CD4-positive, alpha-beta T cell (primary cell): ENCODE measurements at regions of chr19 and their contacts with region 1.

Region 1: DNA sequence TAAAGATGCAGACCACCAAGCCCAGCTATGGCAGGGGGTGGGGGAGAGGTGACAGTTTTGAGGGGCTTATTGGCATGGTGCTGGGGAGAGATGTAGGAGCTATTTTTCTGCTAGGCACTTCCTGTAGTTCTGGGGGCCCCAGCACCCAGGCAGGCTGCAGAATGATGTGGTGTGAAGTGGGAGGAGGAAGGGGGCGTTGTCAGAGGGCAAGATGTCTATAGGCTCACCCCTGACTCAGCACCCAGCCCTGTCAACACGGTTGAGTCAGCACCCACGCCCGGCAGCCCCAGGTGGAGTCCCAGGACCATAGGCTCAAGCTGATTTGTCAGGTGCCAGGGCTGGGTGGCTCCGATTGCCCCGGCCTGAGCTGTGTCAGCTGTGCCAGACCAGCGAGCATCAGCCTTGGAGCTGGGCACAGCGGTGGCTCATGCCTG is 5.8 kb downstream of the KLF2 start:
- DNase-seq: peak; percentile 87 to 98 (median 94)
- ATAC-seq: peak; percentile 66
- H3K4me3 ChIP-seq: peak overlapping the region; percentile 98
- H3K4me3 Mint-ChIP-seq: peak overlapping the region; percentile 92
- H3K27ac ChIP-seq: peak overlapping the region; percentile 77 to 94
- H3K27ac Mint-ChIP-seq: peak overlapping the region; percentile 97
- H3K4me1 ChIP-seq: peaks cover 49% of the 10 kb centered on the region
- H3K4me1 Mint-ChIP-seq: peaks cover 59% of the 10 kb centered on the region
- H3K27me3 ChIP-seq: no peaks in the 10 kb centered on the region
- H3K27me3 Mint-ChIP-seq: peaks cover 24% of the 10 kb centered on the region
- CTCF ChIP-seq: no peak

Region 2: GRCh38 chr19:16247353-16248182 is 82.8 kb before region 1 on chr19:
- CTCF ChIA-PET with region 1: interaction called, 9 read pairs
- POLR2A ChIA-PET with region 1: interaction called, 45 read pairs
- intact Hi-C with region 1: no loop called
- DNase-seq: peak; percentile 64 to 93 (median 83)
- ATAC-seq: peak; percentile 84
- H3K4me3 ChIP-seq: no peak overlapping the region
- H3K4me3 Mint-ChIP-seq: no peak overlapping the region
- H3K27ac ChIP-seq: no peak overlapping the region
- H3K27ac Mint-ChIP-seq: peak overlapping the region; percentile 31
- H3K4me1 ChIP-seq: peaks cover 17% of the 10 kb centered on the region
- H3K4me1 Mint-ChIP-seq: peaks cover 38% of the 10 kb centered on the region
- H3K27me3 ChIP-seq: no peaks in the 10 kb centered on the region
- H3K27me3 Mint-ChIP-seq: no peaks in the 10 kb centered on the region
- CTCF ChIP-seq: peak; percentile 80

Region 3: DNA sequence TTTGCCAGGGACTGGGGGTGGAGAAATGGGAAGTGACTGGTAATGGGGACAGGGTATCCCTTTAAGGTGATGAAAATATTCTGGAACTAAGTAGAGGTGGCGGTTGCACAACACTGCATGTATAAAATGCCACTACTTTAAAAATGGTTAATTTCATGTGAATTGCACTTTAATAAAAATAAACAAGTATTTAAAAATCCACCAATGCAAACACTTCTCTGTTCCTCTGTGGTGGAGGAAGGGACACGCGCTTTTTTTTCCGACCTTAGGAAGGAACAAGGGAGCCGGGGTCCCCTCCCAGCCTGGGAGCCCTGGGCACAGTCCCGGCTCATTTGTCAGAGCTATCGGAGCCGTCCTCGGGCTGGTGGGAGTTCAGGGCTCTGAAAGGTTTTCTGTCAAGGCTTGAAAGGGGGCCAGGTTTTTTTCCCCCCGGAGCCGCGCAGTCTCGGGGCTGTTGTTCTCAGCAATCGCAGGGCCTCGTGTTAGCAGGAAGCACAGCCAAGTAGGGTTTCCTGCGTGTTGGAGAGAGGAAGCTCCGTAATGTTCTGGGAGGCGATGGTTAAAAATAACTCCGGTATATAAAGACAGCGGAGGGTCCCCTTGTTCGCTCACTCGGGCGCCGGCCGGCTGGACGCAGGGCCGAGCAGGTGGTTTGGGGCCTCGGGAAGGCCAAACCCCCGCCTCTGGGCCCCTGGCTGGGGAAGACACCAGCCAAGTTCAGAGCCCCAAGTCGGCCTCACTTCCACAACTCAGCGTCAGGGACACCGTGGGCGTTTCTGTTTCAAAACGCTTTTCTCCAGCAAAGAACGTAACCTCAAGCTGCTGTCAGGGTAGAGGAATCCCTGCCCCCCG is 46.9 kb before region 1 on chr19:
- CTCF ChIA-PET with region 1: interaction called, 3 read pairs
- POLR2A ChIA-PET with region 1: interaction called, 11 read pairs
- intact Hi-C with region 1: no loop called
- DNase-seq: peak; percentile 22 to 75 (median 52)
- ATAC-seq: peak; percentile 86
- H3K4me3 ChIP-seq: peak overlapping the region; percentile 46
- H3K4me3 Mint-ChIP-seq: peak overlapping the region; percentile 67
- H3K27ac ChIP-seq: peak overlapping the region; percentile 43 to 77
- H3K27ac Mint-ChIP-seq: peak overlapping the region; percentile 67
- H3K4me1 ChIP-seq: peaks cover 42% of the 10 kb centered on the region
- H3K4me1 Mint-ChIP-seq: peaks cover 47% of the 10 kb centered on the region
- H3K27me3 ChIP-seq: peaks cover 0 to 2% of the 10 kb centered on the region in 2 experiments
- H3K27me3 Mint-ChIP-seq: no peaks in the 10 kb centered on the region
- CTCF ChIP-seq: no peak

Region 4: DNA sequence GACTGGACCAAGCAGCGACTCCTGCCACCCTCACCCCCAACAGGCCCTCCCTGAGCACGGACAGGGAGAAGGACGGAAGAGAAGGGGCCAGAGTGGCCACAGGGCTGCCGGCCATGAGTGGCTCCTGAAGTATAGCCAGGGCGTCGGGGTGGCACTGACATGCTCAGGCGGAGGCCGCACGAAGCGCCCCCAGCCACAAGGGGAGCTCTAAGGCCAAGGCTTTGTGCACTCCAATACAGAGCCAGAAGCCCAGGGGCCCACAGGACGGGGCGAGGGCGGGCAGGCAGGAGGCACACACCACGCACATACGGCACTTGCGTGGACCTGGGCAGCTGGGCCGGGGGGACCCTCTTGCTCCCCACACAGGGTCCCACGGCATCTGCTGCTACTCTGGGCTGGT is 46.3 kb after region 1 on chr19:
- CTCF ChIA-PET with region 1: interaction called, 106 read pairs
- POLR2A ChIA-PET with region 1: interaction called, 3,819 read pairs
- intact Hi-C with region 1: loop called in 1 of 2 experiments (anchors 1 kb)
- DNase-seq: peak in 7 of 14 experiments; percentile 34 to 65 (median 49)
- ATAC-seq: peak; percentile 41
- H3K4me3 ChIP-seq: no peak overlapping the region
- H3K4me3 Mint-ChIP-seq: no peak overlapping the region
- H3K27ac ChIP-seq: peak overlapping the region; percentile 15 to 41
- H3K27ac Mint-ChIP-seq: no peak overlapping the region
- H3K4me1 ChIP-seq: peaks cover 99% of the 10 kb centered on the region
- H3K4me1 Mint-ChIP-seq: peaks cover 74% of the 10 kb centered on the region
- H3K27me3 ChIP-seq: no peaks in the 10 kb centered on the region
- H3K27me3 Mint-ChIP-seq: no peaks in the 10 kb centered on the region
- CTCF ChIP-seq: peak; percentile 28

Region 5: GRCh38 chr19:16446724-16447368 is 116.5 kb after region 1 on chr19:
- CTCF ChIA-PET with region 1: no interaction called
- POLR2A ChIA-PET with region 1: no interaction called
- intact Hi-C with region 1: no loop called
- DNase-seq: peak in 5 of 14 experiments; percentile 7 to 70 (median 55)
- ATAC-seq: peak; percentile 27
- H3K4me3 ChIP-seq: no peak overlapping the region
- H3K4me3 Mint-ChIP-seq: no peak overlapping the region
- H3K27ac ChIP-seq: no peak overlapping the region
- H3K27ac Mint-ChIP-seq: peak overlapping the region; percentile 67
- H3K4me1 ChIP-seq: peaks cover 37% of the 10 kb centered on the region
- H3K4me1 Mint-ChIP-seq: peaks cover 64% of the 10 kb centered on the region
- H3K27me3 ChIP-seq: no peaks in the 10 kb centered on the region
- H3K27me3 Mint-ChIP-seq: no peaks in the 10 kb centered on the region
- CTCF ChIP-seq: no peak

Region 6: GRCh38 chr19:16726916-16727315 is 396.5 kb after region 1 on chr19:
- CTCF ChIA-PET with region 1: no interaction called
- POLR2A ChIA-PET with region 1: no interaction called
- intact Hi-C with region 1: no loop called
- DNase-seq: no peak
- ATAC-seq: no peak
- H3K4me3 ChIP-seq: no peak overlapping the region
- H3K4me3 Mint-ChIP-seq: no peak overlapping the region
- H3K27ac ChIP-seq: no peak overlapping the region
- H3K27ac Mint-ChIP-seq: no peak overlapping the region
- H3K4me1 ChIP-seq: no peaks in the 10 kb centered on the region
- H3K4me1 Mint-ChIP-seq: no peaks in the 10 kb centered on the region
- H3K27me3 ChIP-seq: peaks cover 3 to 4% of the 10 kb centered on the region in 2 experiments
- H3K27me3 Mint-ChIP-seq: peaks cover 4% of the 10 kb centered on the region
- CTCF ChIP-seq: no peak